Colonic mucosa (tissue), 4 donors: ENCODE measurements at regions of chr22 and their contacts with region 1.

Region 1: GRCh38 chr22:39152511-39153219 is at the start of gene CBX7:
- DNase-seq: peak; percentile 94
- H3K4me3 ChIP-seq: peak within 1 kb of the TSS; percentile 65
- H3K27ac ChIP-seq: peak within 1 kb of the TSS; percentile 69
- H3K4me1 ChIP-seq: no peaks in the 10 kb centered on the region
- H3K27me3 ChIP-seq: peaks cover 18% of the 10 kb centered on the region
- CTCF ChIP-seq: no peak
- total RNA-seq, gene CBX7: 15.0 to 21.1 TPM

Region 2: DNA sequence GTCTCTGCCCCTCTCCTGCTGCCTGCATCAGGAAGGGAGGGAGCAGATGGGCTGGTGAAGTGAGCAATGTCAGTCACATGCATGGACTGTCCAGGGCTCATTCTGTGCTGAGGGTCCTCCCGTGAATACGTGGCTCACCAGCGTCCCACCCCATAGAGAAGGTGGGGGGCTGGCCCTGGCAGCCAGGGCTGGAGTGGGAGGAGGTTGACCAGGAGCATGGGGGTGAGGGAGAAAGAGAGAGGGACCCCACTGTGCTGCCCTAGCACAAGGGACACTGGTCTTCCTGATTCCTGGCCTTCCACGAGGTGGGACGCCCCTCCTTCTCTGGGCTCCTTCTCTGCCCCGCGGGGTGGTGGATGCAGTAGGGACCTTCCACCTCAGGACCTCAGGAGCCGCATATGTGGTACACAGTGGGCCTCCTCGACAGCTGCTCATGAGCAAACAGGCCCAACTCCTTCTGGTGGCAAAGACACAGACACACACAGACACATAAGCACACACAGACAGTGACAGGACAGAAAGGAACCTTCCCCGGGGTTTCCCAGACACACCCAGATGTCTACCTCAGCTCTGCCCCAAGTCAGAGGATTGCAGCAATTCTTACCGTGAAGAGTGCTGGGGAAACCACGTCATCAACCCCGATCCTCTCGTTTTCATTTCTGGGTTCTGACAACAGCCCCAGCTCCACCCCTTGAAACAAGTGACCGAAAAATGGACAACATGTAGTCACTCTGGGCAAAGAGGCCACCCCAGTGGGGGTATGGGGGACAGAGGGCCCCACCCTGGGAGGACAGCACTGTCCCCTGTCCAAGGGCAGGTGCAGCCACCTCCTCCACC is 198.9 kb before region 1 on chr22:
- intact Hi-C with region 1: no loop called
- DNase-seq: peak; percentile 50
- H3K4me3 ChIP-seq: no peak overlapping the region
- H3K27ac ChIP-seq: peak overlapping the region; percentile 32
- H3K4me1 ChIP-seq: no peaks in the 10 kb centered on the region
- H3K27me3 ChIP-seq: no peaks in the 10 kb centered on the region
- CTCF ChIP-seq: no peak

Region 3: DNA sequence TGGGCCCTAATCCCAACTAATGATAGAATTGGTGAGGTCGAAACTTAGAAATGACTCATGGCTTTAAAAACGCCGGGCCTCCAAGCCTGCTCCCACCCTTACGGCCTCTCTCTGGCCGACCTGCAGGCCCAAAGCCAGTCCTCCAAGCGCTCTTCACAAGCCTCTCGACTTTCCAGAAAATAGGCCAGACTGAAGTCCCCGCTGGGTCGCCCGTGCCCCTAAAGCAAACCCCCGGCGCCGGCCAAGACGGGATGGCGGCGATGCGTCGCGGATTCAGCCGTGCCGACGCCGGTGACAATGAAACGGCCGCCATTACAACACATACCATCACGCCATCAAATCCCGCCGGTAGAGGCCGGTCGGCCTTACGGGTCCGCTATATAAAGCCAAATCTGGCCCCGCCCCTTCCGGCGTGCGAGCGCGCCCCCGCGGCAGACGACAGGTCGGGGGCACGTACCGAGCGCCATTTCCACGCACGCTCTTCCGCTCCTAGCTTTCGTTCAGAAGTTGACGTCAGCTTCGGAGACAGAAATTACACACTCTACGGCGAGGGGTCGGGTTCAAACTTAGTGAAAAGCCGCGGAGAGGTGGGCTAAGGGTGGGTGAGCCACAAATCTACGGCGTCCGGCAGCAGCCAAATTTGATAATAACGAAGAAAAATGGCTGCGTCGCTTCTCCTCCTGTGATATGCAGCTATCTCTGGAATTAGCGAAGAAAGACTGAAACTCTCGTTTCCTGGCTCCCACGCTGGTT is 166.8 kb after region 1 on chr22 and contains the start of gene RPL3:
- intact Hi-C with region 1: loop called (anchors 5 kb)
- DNase-seq: peak; percentile 97
- H3K4me3 ChIP-seq: peak within 1 kb of the TSS; percentile 83
- H3K27ac ChIP-seq: peak within 1 kb of the TSS; percentile 99
- H3K4me1 ChIP-seq: peaks cover 28% of the 10 kb centered on the region
- H3K27me3 ChIP-seq: no peaks in the 10 kb centered on the region
- CTCF ChIP-seq: no peak
- total RNA-seq, gene RPL3: 1,796 to 1,829 TPM